Right ventricle myocardium inferior (tissue), 1 donor: ENCODE measurements at regions of chrX and their contacts with region 1.

Region 1: DNA sequence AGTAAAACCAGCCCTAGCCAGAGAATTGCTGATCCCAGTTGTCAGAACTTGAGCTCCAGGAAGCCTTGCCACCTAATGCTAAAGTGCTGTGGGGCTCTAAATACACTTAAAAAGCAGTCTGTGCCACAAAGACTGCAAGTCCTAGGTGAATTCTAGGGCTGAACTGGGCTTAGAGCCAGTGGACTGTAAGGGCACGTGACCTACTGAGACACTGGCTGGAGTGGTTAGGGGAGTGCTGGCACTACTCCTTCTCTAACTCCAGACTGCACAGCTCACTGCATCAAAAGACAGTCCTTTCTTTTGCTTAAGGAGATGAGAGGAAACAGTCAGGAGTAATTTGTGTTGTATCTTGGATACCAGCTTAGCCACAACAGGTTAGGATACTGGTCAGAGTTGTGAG is 1240.2 kb downstream of the FAM133A start:
- DNase-seq: no peak
- ATAC-seq: no peak

Region 2: GRCh38 chrX:94850811-94851210 is 63.4 kb before region 1 on chrX:
- intact Hi-C with region 1: loop called (anchors 10 kb)
- DNase-seq: no peak
- ATAC-seq: no peak

Region 3: DNA sequence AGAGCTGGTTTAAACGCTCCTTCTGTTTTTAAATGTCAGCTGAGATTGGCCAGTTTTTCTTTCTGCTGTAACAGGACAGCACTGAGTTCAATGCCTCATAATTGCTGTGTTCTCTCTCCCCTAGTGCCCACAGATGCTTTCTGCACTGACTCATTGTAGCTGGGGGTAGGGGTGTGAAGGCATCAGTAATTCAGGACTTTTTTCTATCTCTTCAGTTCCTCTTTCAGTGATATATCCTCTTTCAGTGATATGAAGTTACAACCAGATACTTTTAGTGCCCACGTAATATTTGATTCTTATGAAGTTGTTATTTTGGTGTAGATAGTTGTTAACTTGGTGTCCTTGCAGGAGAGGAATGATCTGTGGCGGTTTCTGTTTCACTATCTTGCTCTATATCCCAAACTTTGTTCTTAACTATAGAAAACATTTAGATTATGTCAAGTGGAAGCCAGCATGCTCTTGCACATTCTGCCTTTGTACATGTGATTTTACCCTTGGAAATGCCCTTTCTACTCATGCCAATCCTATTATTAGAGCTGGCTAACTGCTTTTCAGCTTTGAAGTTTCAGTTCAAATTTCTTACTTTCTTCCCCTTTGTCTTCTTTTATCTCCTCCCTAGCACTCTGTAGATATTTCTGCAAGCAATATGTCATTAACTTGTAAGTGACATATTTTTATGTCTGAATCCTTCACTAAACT is 18.2 kb after region 1 on chrX:
- intact Hi-C with region 1: loop called (anchors 2 kb)
- DNase-seq: no peak
- ATAC-seq: no peak